ENCODE measurements at regions of chr11 and their contacts with region 1.

Region 1: DNA sequence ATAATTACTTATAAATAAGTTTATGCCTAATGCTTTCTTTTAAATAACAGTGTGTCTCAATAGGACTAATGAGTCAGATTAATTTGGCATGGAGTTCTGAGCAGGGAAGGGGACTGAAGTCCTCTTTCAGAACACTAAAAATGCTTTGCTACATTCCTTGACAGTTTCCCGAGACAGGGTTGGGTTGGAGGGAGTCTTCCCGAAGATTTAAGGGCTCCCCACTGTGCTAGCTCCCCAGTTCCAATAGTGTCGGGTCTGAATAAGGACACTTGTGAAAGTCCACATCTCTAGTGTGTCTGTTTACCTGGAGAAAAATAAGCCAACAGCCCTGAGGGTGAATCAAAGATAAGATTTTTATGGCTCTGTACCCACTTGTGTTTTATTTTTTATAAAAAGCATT is 41.8 kb upstream of the HSD17B12 start:
- DNase-seq: no peak
- ATAC-seq: no peak
- H3K4me3 ChIP-seq: no peak overlapping the region
- H3K27ac ChIP-seq: no peak overlapping the region
- H3K4me1 ChIP-seq: no peaks in the 10 kb centered on the region
- H3K27me3 ChIP-seq: peaks cover 0 to 15% of the 10 kb centered on the region in 2 experiments; a peak in 2 of 5 replicates
- CTCF ChIP-seq: no peak
- EP300 ChIP-seq: no peak
- POLR2A ChIP-seq: no peak
- RAD21 ChIP-seq: no peak

Region 2: GRCh38 chr11:43708776-43709175 is 70.1 kb after region 1 on chr11:
- CTCF ChIA-PET with region 1: no interaction called
- POLR2A ChIA-PET with region 1: no interaction called
- in situ Hi-C with region 1: no loop called
- intact Hi-C with region 1: loop called (anchors 2 kb)
- DNase-seq: no peak
- ATAC-seq: no peak
- H3K4me3 ChIP-seq: no peak overlapping the region
- H3K27ac ChIP-seq: no peak overlapping the region
- H3K4me1 ChIP-seq: no peaks in the 10 kb centered on the region
- H3K27me3 ChIP-seq: no peaks in the 10 kb centered on the region
- CTCF ChIP-seq: no peak
- EP300 ChIP-seq: no peak
- POLR2A ChIP-seq: no peak
- RAD21 ChIP-seq: no peak